Gastrocnemius medialis (tissue), 4 donors: ENCODE measurements at regions of chr11 and their contacts with region 1.

Region 1: GRCh38 chr11:61477727-61478148 is 30.8 kb upstream of the LRRC10B start:
- DNase-seq: peak in 1 of 2 donors; percentile 37
- ATAC-seq: no peak
- H3K4me3 ChIP-seq: no peak overlapping the region
- H3K27ac ChIP-seq: no peak overlapping the region
- H3K4me1 ChIP-seq: peaks cover 1 to 15% of the 10 kb centered on the region in 2 donors
- H3K27me3 ChIP-seq: peaks cover 0 to 6% (median 4%) of the 10 kb centered on the region in 3 donors
- CTCF ChIP-seq: peak; percentile 89 to 96 (median 91)
- POLR2A ChIP-seq: no peak

Region 2: GRCh38 chr11:61516675-61517572 is 39.2 kb after region 1 on chr11:
- in situ Hi-C with region 1: loop called in 2 of 4 experiments (anchors 5 kb)
- intact Hi-C with region 1: loop called (anchors 1 kb)
- DNase-seq: no peak
- ATAC-seq: peak; percentile 35
- H3K4me3 ChIP-seq: peak overlapping the region in 2 of 4 donors; percentile 22 to 32
- H3K27ac ChIP-seq: no peak overlapping the region
- H3K4me1 ChIP-seq: no peaks in the 10 kb centered on the region
- H3K27me3 ChIP-seq: no peaks in the 10 kb centered on the region
- CTCF ChIP-seq: peak; percentile 97 to 99 (median 98)
- POLR2A ChIP-seq: no peak

Region 3: DNA sequence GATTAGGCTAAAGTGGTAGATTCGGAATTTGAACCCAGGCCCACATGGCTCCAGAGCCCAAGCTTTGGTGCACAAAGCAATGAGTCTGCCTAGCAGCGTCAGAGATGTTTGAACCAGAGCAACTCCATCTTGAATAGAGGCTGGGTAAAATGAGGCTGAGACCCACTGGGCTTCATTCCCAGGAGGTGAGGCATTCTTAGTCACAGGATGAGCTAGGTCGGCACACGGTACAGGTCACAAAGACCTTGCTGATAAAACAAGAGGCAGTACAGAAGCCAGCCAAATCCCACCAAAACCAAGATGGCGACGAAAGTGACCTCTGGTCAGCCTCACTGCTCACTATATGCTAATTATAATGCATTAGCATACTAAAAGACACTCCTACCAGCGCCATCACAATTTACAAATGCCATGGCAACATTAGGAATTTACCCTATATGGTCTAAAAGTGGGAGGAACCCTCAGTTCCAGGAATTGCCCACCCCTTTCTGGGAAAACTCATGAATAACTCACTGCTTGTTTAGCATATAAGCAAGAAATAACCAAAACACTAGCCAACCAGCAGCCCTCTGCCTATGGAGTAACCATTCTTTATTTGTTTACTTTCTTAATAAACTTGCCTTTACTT is 162.2 kb after region 1 on chr11:
- in situ Hi-C with region 1: loop called in 3 of 4 experiments (anchors 5 to 25 kb)
- intact Hi-C with region 1: loop called (anchors 2 kb)
- DNase-seq: no peak
- ATAC-seq: no peak
- H3K4me3 ChIP-seq: no peak overlapping the region
- H3K27ac ChIP-seq: no peak overlapping the region
- H3K4me1 ChIP-seq: no peaks in the 10 kb centered on the region
- H3K27me3 ChIP-seq: no peaks in the 10 kb centered on the region
- CTCF ChIP-seq: no peak
- POLR2A ChIP-seq: no peak